OCI-LY7 (cell line): ENCODE measurements at regions of chr5 and their contacts with region 1.

Region 1: DNA sequence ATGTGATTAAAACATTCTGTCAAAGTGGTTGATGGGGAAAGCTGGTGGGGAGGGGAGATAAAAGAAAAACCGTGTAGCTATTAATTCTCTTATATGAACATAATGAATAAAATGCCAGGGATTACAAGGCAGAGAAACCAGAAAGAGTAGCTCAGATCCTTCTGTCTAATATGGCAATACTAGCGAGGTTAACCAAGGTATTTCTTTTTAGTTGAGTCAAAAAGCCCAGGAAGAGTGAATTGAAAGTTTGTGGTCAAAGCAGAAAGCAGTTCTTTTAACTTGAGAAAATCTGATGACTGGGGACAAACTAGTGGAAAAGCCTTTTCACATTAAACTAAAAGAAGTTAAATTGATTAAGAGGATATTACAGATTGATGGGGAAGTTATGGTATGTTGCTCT is 76.0 kb downstream of the ERBIN start:
- DNase-seq: no peak
- H3K4me3 ChIP-seq: no peak overlapping the region
- H3K27ac ChIP-seq: no peak overlapping the region
- H3K4me1 ChIP-seq: no peaks in the 10 kb centered on the region
- CTCF ChIP-seq: no peak

Region 2: GRCh38 chr5:65938256-65938655 is 64.2 kb before region 1 on chr5:
- CTCF ChIA-PET with region 1: no interaction called
- POLR2A ChIA-PET with region 1: interaction called, 3 read pairs
- intact Hi-C with region 1: loop called (anchors 2 kb)
- DNase-seq: peak; percentile 91
- H3K4me3 ChIP-seq: peak overlapping the region; percentile 54
- H3K27ac ChIP-seq: peak overlapping the region; percentile 87
- H3K4me1 ChIP-seq: peaks cover 65% of the 10 kb centered on the region
- CTCF ChIP-seq: no peak